A549 (cell line): ENCODE measurements at regions of chr2 and their contacts with region 1.

Region 1: GRCh38 chr2:112481050-112481527 is 867 bp upstream of the TTL start:
- DNase-seq: peak; percentile 87 to 89
- ATAC-seq: peak; percentile 86 to 94
- H3K4me3 ChIP-seq: peak overlapping the region; percentile 59
- H3K27ac ChIP-seq: peak overlapping the region; percentile 84 to 93
- H3K4me1 ChIP-seq: peaks cover 13% of the 10 kb centered on the region
- CTCF ChIP-seq: peak; percentile 70
- EP300 ChIP-seq: no peak
- POLR2A ChIP-seq: peak; percentile 21; the same call in 1 of the 2 replicates
- RAD21 ChIP-seq: peak; percentile 81 to 82

Region 2: GRCh38 chr2:112454586-112454985 is 26.5 kb before region 1 on chr2:
- CTCF ChIA-PET with region 1: interaction called, 10 read pairs
- POLR2A ChIA-PET with region 1: no interaction called
- DNase-seq: no peak
- ATAC-seq: no peak
- H3K4me3 ChIP-seq: no peak overlapping the region
- H3K27ac ChIP-seq: no peak overlapping the region
- H3K4me1 ChIP-seq: no peaks in the 10 kb centered on the region
- CTCF ChIP-seq: no peak
- EP300 ChIP-seq: no peak
- POLR2A ChIP-seq: no peak
- RAD21 ChIP-seq: no peak

Region 3: GRCh38 chr2:112465382-112465781 is 15.7 kb before region 1 on chr2:
- CTCF ChIA-PET with region 1: interaction called, 18 read pairs
- POLR2A ChIA-PET with region 1: no interaction called
- DNase-seq: peak; percentile 18 to 19
- ATAC-seq: peak in 1 of 2 experiments; percentile 58; a peak in 3 of 6 replicates
- H3K4me3 ChIP-seq: no peak overlapping the region
- H3K27ac ChIP-seq: no peak overlapping the region
- H3K4me1 ChIP-seq: no peaks in the 10 kb centered on the region
- CTCF ChIP-seq: no peak
- EP300 ChIP-seq: no peak
- POLR2A ChIP-seq: no peak
- RAD21 ChIP-seq: no peak

Region 4: GRCh38 chr2:112493858-112494648 is 13.0 kb after region 1 on chr2:
- CTCF ChIA-PET with region 1: interaction called, 24 read pairs
- POLR2A ChIA-PET with region 1: interaction called, 4 read pairs
- DNase-seq: peak; percentile 65 to 75
- ATAC-seq: peak; percentile 97 to 99
- H3K4me3 ChIP-seq: no peak overlapping the region
- H3K27ac ChIP-seq: peak overlapping the region; percentile 42 to 77
- H3K4me1 ChIP-seq: peaks cover 25% of the 10 kb centered on the region
- CTCF ChIP-seq: no peak
- EP300 ChIP-seq: no peak
- POLR2A ChIP-seq: no peak
- RAD21 ChIP-seq: no peak

Region 5: DNA sequence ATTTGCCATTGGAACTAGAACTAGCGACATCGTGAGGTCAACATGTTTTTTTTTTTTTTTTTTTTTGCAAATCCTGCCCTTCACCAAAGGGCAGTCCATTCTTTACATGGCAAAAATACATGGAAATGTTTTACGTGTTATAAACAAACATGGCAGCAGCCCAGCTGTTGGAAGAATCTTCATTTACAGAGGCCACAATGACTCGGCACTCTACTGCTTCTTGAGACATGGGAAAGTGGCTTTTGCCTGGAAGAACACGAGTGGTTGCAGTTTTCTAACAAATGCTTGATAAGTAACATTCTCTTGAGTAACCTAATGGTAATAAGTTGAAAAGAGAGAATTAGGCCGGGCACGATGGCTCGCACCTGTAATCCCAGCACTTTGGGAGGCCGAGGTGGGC is 38.4 kb after region 1 on chr2:
- CTCF ChIA-PET with region 1: interaction called, 14 read pairs
- POLR2A ChIA-PET with region 1: no interaction called
- DNase-seq: peak in 1 of 2 experiments; percentile 17
- ATAC-seq: no peak
- H3K4me3 ChIP-seq: no peak overlapping the region
- H3K27ac ChIP-seq: 0 out of 6 replicates have a peak overlapping the region, but pooled peaks of 1 of the 2 experiments have one; percentile 7
- H3K4me1 ChIP-seq: no peaks in the 10 kb centered on the region
- CTCF ChIP-seq: no peak
- EP300 ChIP-seq: no peak
- POLR2A ChIP-seq: no peak
- RAD21 ChIP-seq: no peak

Region 6: GRCh38 chr2:112584134-112584890 is 103.2 kb after region 1 on chr2 and contains the start of gene CHCHD5:
- CTCF ChIA-PET with region 1: interaction called, 14 read pairs
- POLR2A ChIA-PET with region 1: interaction called, 3 read pairs
- DNase-seq: peak; percentile 89 to 97
- ATAC-seq: peak; percentile 88 to 92
- H3K4me3 ChIP-seq: peak within 1 kb of the TSS; percentile 55
- H3K27ac ChIP-seq: peak within 1 kb of the TSS; percentile 96 to 97
- H3K4me1 ChIP-seq: peaks cover 21% of the 10 kb centered on the region
- CTCF ChIP-seq: no peak
- EP300 ChIP-seq: no peak; a peak in 1 of 5 replicates
- POLR2A ChIP-seq: peak; percentile 57
- RAD21 ChIP-seq: no peak
- polyA plus RNA-seq, gene CHCHD5: 15.0 and 17.6 TPM in 2 replicates